Transverse colon (tissue), 4 donors: ENCODE measurements at regions of chr11 and their contacts with region 1.

Region 1: DNA sequence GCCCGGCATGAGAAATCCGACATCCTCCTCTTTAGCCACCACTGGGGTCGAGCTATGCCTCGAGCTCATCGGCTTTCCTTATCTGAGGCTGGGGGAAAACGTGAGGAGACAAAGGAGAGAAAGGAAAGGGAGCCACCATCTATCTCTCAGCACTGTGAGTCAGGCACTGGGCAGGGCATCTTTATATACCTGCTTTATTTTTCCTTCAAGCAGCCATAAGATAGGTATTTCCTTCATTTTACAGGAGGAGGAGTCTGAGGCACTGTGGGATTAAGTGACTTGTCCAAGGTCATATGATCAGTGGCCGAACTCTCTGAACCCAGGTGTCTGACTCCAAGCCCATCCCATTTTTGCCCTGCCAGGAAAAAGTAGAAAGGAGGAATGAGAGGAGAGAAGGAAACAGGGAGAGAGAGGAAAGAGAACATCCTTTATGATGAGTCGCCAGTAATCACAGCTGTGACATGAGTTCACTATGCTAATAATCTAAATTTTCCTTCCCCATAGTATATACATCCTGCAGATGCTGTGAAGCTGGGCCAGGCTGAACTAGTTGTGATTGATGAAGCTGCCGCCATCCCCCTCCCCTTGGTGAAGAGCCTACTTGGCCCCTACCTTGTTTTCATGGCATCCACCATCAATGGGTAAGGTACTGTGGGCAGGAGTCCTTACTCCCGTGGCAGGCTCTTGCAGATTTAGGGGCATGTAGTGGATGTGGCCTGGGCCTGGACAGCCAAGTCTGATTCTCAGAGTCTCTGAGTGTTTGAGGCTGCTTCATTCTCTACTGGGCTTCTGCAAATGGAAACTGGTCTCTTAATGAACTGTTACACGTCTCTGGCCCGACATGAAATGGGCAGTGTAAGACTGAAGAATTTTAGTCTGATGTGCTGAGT is 21.8 kb downstream of the NAT10 start:
- DNase-seq: no peak
- H3K4me3 ChIP-seq: no peak overlapping the region
- H3K27ac ChIP-seq: no peak overlapping the region
- H3K4me1 ChIP-seq: no peaks in the 10 kb centered on the region
- H3K27me3 ChIP-seq: no peaks in the 10 kb centered on the region
- CTCF ChIP-seq: no peak
- EP300 ChIP-seq: no peak
- POLR2A ChIP-seq: no peak

Region 2: DNA sequence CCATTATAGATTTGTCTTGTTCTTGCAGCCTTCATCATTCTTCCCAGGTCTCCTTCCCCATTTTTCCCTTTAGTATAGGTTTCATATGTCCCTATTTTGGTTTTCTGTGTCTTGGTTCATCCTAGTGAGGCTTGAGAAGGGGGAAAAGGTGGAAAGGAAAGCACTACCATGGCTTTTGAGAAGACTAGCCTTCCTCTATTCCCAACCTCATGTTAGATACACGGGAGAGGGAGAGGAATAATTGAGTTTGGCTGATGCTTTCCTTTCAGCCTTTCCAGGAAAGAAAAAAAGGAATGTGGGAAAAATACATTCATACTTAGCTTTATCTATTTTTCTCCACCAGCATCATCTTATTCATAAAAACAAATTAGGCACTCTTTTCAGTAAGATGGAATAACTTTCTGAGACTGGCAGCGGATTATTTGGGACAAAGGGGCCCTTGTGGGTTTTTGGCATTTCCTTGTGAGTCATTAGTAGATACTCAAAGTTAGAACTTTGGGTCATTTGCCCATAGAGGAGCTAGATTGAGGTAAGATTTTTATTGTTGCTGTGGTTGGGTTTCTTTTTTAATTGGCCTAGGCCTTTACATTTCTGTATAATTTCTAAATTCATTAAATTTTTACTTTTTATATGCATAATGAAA is 51.9 kb before region 1 on chr11:
- in situ Hi-C with region 1: no loop called
- intact Hi-C with region 1: loop called (anchors 1 kb)
- DNase-seq: no peak
- H3K4me3 ChIP-seq: no peak overlapping the region
- H3K27ac ChIP-seq: peak overlapping the region in 2 of 4 donors; percentile 34 to 40
- H3K4me1 ChIP-seq: peaks cover 0 to 29% (median 18%) of the 10 kb centered on the region in 4 donors
- H3K27me3 ChIP-seq: no peaks in the 10 kb centered on the region
- CTCF ChIP-seq: no peak
- EP300 ChIP-seq: no peak
- POLR2A ChIP-seq: no peak